Brain microvascular endothelial cell (primary cell): ENCODE measurements at regions of chr10 and their contacts with region 1.

Region 1: GRCh38 chr10:95374597-95375209 is 83.9 kb upstream of the PDLIM1 start:
- DNase-seq: peak; percentile 53
- H3K4me3 ChIP-seq: no peak overlapping the region
- H3K27ac ChIP-seq: no peak overlapping the region
- H3K27me3 ChIP-seq: no peaks in the 10 kb centered on the region
- CTCF ChIP-seq: peak; percentile 96

Region 2: GRCh38 chr10:95183271-95184230 is 191.2 kb before region 1 on chr10:
- in situ Hi-C with region 1: loop called (anchors 25 kb)
- DNase-seq: peak; percentile 67
- H3K4me3 ChIP-seq: peak overlapping the region; percentile 67
- H3K27ac ChIP-seq: no peak overlapping the region
- H3K27me3 ChIP-seq: no peaks in the 10 kb centered on the region
- CTCF ChIP-seq: peak; percentile 74

Region 3: GRCh38 chr10:95254629-95255028 is 120.1 kb before region 1 on chr10:
- in situ Hi-C with region 1: no loop called
- DNase-seq: no peak
- H3K4me3 ChIP-seq: no peak overlapping the region
- H3K27ac ChIP-seq: no peak overlapping the region
- H3K27me3 ChIP-seq: no peaks in the 10 kb centered on the region
- CTCF ChIP-seq: no peak

Region 4: DNA sequence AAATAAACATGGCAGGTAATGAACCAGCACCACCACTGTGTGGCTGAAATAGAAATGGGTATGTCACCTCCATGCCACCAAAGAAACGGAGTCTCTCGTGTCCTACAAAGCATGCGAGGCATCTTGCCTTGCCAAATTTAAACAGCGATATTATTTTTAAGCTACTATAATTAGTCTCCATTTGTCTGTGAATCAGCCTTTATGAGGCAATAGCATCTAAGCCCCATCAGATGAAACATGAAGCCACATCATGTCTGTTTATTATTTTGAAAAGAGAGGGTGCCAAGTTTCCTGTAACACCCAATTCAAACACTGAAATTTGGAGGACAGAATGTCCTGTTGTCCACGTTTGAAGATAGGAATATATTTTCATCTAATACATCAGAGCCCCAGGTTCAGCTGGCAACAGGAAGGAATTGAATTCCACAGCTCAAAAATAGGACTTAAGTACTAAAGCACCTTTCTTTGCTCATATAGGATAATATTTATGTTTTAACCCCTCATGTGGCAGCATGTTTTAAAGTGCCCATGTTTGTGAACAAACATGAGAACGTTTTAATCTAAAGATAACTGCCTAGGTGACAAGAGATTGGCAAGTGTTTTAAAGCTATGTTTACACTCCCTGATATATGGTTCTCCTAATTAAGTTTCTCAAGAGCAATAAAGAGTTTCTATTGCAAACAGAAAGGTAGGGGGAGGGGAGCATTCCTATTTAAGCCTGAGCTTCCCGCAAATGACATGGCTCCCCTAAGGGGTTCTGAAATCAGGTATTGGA is 99.7 kb after region 1 on chr10:
- in situ Hi-C with region 1: no loop called
- DNase-seq: no peak
- H3K4me3 ChIP-seq: no peak overlapping the region
- H3K27ac ChIP-seq: no peak overlapping the region
- H3K27me3 ChIP-seq: no peaks in the 10 kb centered on the region
- CTCF ChIP-seq: no peak